CD4-positive, alpha-beta memory T cell (primary cell): ENCODE measurements at regions of chr1 and their contacts with region 1.

Region 1: DNA sequence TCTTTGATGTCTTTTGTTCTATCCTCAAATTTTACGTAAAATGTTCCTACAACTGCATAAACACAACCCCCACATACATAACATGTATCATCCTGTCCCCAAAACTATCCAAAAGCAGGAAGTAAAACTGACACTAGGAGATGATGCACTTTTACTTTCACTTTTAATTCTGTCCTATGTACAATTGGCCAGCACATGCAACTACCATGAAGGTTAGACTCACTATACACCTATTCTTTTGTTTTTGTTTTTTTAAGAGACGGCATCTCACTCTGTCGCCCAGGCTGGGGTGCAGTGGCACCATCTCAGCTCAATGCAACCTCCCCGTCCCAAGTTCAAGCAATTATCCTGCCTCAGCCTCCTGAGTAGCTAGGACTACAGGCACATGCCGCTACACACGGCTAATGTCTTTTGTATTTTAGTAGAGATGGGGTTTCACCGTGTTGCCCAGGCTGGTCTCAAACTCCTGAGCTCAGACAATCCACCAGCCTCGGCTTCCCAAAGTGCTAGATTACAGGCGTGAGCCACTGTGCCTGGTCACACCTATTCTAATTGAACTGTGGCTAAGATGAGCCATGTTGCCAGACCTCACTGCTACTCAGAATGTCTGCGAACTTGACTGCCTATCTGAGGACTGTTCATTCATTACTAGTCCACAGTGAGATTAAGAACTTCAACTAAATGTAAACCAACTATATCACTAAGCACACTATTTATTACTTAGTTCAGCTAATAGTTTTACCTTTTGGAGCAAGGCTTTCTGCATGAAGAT is 48.0 kb downstream of the TOR3A start:
- DNase-seq: peak; percentile 44 to 77 (median 72)
- H3K4me3 ChIP-seq: peak overlapping the region; percentile 19 to 34
- H3K4me3 Mint-ChIP-seq: peak overlapping the region; percentile 67 to 94 (median 86)
- H3K27ac ChIP-seq: peak overlapping the region; percentile 63
- H3K27ac Mint-ChIP-seq: peak overlapping the region; percentile 78 to 98 (median 95)
- H3K4me1 ChIP-seq: peaks cover 15% of the 10 kb centered on the region
- H3K4me1 Mint-ChIP-seq: peaks cover 7 to 17% (median 13%) of the 10 kb centered on the region in 4 donors
- H3K27me3 ChIP-seq: no peaks in the 10 kb centered on the region
- H3K27me3 Mint-ChIP-seq: no peaks in the 10 kb centered on the region

Region 2: DNA sequence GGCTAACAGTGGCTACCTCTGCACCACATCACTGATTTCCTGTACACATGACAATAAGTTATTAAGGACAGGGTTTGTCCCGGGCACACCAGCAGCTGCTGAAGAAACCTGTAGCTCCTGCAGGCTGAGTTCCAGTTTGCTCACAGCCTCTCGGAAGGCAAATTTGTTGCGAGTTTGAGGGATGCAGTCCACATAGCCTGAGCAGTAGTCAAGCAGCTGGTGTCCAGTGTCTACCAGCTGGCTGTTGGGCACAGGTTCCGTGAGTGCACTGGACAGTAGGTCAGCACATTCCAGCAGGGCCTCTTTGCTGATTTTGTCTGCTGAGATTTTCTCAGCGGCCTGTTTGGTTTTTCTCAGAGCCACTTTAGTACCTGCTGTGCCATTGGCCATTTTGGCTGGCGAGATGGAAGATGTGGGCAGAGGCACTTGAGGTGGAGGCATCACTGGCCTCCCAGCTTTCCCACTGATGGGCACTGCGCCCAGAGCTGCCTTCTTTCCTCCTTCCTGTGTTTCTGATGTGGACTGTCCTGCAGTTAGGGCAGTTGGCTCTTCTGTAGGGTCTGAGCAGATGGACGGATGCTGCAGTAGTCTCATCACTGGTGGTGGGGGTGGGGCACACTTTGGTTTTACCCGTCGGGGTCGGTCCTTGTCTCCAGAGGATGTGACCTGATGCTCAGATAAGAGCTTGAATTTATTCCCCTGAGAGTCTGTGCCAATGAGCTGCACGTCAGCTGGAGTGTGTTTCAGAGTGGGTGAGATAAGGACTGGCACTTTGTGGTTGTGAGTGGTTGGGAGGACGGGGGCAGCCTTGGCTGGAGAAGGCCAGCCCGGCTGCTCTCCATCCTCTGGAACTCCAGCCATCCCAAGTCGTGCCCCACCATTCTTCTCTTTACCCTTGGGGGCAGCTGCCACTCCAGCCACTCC is 21.9 kb before region 1 on chr1:
- CTCF ChIA-PET with region 1: interaction called, 12 read pairs
- POLR2A ChIA-PET with region 1: no interaction called
- intact Hi-C with region 1: no loop called
- DNase-seq: no peak
- H3K4me3 ChIP-seq: no peak overlapping the region
- H3K4me3 Mint-ChIP-seq: no peak overlapping the region
- H3K27ac ChIP-seq: no peak overlapping the region
- H3K27ac Mint-ChIP-seq: no peak overlapping the region
- H3K4me1 ChIP-seq: no peaks in the 10 kb centered on the region
- H3K4me1 Mint-ChIP-seq: no peaks in the 10 kb centered on the region
- H3K27me3 ChIP-seq: no peaks in the 10 kb centered on the region
- H3K27me3 Mint-ChIP-seq: no peaks in the 10 kb centered on the region

Region 3: GRCh38 chr1:179229214-179230140 is 99.6 kb after region 1 on chr1 and contains the start of gene ABL2:
- CTCF ChIA-PET with region 1: interaction called, 3 read pairs
- POLR2A ChIA-PET with region 1: interaction called, 4 read pairs
- intact Hi-C with region 1: loop called (anchors 5 kb)
- DNase-seq: peak; percentile 37 to 58 (median 50)
- H3K4me3 ChIP-seq: peak within 1 kb of the TSS; percentile 14 to 73
- H3K4me3 Mint-ChIP-seq: peak within 1 kb of the TSS; percentile 92 to 98 (median 93)
- H3K27ac ChIP-seq: peak within 1 kb of the TSS; percentile 59
- H3K27ac Mint-ChIP-seq: peak within 1 kb of the TSS; percentile 91 to 95 (median 92)
- H3K4me1 ChIP-seq: peaks cover 23% of the 10 kb centered on the region
- H3K4me1 Mint-ChIP-seq: peaks cover 22 to 37% (median 29%) of the 10 kb centered on the region in 4 donors
- H3K27me3 ChIP-seq: no peaks in the 10 kb centered on the region
- H3K27me3 Mint-ChIP-seq: no peaks in the 10 kb centered on the region
- total RNA-seq, gene ABL2: 16.9 to 18.6 TPM

Region 4: DNA sequence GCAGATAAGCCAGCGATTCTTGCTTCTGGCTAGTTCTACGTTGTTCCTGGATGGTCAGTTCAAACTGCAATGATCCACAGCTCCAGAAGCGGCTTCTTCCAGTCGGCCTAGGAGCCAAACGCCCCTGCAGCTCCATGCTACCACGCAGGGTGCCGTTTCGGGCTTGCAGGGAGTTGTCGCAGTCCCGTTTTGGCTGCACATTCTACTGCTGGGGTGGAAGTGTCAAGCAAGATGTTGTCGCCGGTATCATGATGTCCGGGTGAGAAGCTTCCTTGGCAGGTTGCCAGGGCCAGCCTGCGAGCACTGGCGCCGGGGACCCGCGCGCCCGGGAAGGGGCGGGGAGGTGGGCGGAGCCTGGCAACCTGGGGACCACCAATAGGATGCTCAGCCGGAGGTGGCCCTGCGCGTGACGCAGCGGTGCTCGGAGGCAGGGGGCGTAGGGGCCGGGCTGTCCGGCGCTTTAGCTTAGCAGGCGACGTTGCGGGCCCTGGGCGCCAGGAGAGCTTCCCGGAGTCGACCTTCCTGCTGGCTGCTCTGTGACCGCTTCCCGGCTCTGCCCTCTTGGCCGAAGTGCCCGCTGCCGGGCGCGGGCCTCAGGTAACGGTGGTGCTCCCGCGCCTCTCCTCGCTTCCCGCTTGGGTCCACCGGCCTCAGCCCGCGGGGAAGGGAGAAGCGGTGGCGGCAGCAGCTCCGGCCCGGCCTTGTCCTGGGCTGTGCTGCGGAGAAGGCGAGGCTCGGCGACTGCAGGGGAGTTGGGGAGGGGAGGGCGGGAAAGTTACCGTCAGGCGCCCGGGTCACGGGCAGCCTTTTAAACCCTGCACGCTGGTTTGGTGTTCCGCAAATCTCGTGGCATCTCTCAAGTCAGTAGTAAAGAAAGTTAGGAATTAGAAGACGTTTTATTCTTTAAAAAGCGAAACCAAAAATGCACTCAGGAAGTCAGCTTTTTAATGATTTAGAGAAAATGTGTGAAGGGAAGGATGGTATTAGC is 163.7 kb after region 1 on chr1 and contains the start of gene SOAT1:
- CTCF ChIA-PET with region 1: interaction called, 3 read pairs
- POLR2A ChIA-PET with region 1: interaction called, 6 read pairs
- intact Hi-C with region 1: loop called (anchors 1 kb)
- DNase-seq: peak; percentile 89 to 92 (median 90)
- H3K4me3 ChIP-seq: peak within 1 kb of the TSS; percentile 82 to 93
- H3K4me3 Mint-ChIP-seq: peak within 1 kb of the TSS; percentile 91 to 99 (median 96)
- H3K27ac ChIP-seq: peak within 1 kb of the TSS; percentile 86
- H3K27ac Mint-ChIP-seq: peak within 1 kb of the TSS; percentile 81 to 98 (median 95)
- H3K4me1 ChIP-seq: peaks cover 46% of the 10 kb centered on the region
- H3K4me1 Mint-ChIP-seq: peaks cover 25 to 47% (median 31%) of the 10 kb centered on the region in 4 donors
- H3K27me3 ChIP-seq: no peaks in the 10 kb centered on the region
- H3K27me3 Mint-ChIP-seq: no peaks in the 10 kb centered on the region
- total RNA-seq, gene SOAT1: 51.2 to 51.6 TPM